ENCODE measurements at regions of chr6 and their contacts with region 1.

Region 1: DNA sequence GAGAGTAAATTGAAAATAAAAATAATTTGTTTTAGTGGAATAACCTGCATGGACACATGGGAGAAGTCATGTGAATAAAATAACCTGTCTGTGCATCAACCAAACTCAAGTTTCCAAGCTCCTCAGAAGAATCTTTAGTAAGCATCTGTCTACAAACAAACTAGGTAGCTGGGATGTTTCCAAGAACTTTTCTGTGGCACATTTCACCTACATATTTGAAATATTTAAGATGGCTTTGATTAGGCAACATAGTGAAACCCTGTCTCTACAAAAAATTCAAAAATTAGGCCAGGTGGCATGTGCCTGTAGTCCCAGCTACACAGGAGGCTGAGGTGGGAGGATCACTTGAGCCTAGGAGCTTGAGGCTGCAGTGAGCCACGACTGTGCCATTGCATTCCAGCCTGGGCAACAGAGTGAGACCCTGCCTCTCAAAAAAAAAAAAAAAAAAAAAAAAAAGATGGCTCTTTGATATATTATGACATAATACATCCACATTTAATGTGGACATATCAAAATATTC is 168.1 kb downstream of the DST start:
- DNase-seq: no peak
- ATAC-seq: no peak

Region 2: GRCh38 chr6:56501993-56502392 is 27.4 kb after region 1 on chr6:
- intact Hi-C with region 1: loop called (anchors 5 kb)
- DNase-seq: no peak
- ATAC-seq: no peak

Measured in Right ventricle myocardium inferior (tissue), 1 donor.